Activated B cell treated with CpG ODN at 0.5 μM for 24 hours (primary cell): ENCODE measurements at regions of chr2 and their contacts with region 1.

Region 1: GRCh38 chr2:191696966-191697365 is 19.0 kb downstream of the NABP1 start:
- DNase-seq: no peak
- ATAC-seq: no peak
- H3K4me3 Mint-ChIP-seq: no peak overlapping the region
- H3K27ac Mint-ChIP-seq: no peak overlapping the region
- H3K4me1 Mint-ChIP-seq: peaks cover 4% of the 10 kb centered on the region
- H3K27me3 Mint-ChIP-seq: no peaks in the 10 kb centered on the region
- CTCF ChIP-seq: no peak

Region 2: GRCh38 chr2:191213333-191213732 is 483.6 kb before region 1 on chr2:
- CTCF ChIA-PET with region 1: no interaction called
- POLR2A ChIA-PET with region 1: interaction called, 10 read pairs
- intact Hi-C with region 1: no loop called
- DNase-seq: no peak
- ATAC-seq: no peak
- H3K4me3 Mint-ChIP-seq: no peak overlapping the region
- H3K27ac Mint-ChIP-seq: no peak overlapping the region
- H3K4me1 Mint-ChIP-seq: no peaks in the 10 kb centered on the region
- H3K27me3 Mint-ChIP-seq: peaks cover 2% of the 10 kb centered on the region
- CTCF ChIP-seq: no peak

Region 3: DNA sequence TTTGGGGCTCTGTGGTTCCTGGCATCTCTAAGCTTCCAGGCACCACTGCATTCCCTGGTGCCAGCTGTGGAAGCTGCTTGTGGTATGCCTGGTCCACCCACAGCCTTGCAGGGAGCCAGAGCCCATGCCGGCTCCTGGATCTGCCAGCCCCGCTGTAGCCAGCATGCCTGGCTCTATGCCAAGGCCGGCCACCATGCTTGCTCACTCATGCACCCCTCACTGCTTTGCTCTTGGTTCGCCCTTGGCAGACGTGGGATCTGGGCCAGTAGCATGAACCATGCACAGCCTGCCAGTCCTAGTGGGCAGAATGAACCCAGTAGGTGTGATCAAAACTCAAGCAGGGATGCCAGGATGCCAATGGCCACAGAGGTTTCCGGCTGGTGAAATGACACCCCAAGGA is 1132.0 kb after region 1 on chr2:
- CTCF ChIA-PET with region 1: no interaction called
- POLR2A ChIA-PET with region 1: no interaction called
- intact Hi-C with region 1: no loop called
- DNase-seq: no peak
- ATAC-seq: no peak
- H3K4me3 Mint-ChIP-seq: no peak overlapping the region
- H3K27ac Mint-ChIP-seq: no peak overlapping the region
- H3K4me1 Mint-ChIP-seq: no peaks in the 10 kb centered on the region
- H3K27me3 Mint-ChIP-seq: no peaks in the 10 kb centered on the region
- CTCF ChIP-seq: no peak